Activated T-helper 1 cell treated with anti-CD3 and anti-CD28 coated beads, Interleukin-12 subunit alpha, Interleukin-12 subunit beta, Interleukin-2, Interleukin-4 antibody, amounts not matched to agents 30 ng/mL and 10 ng/mL and 1 ng/mL, durations not matched to agents 14 hours and 24 hours and 36 hours (primary cell): ENCODE measurements at regions of chr16 and their contacts with region 1.

Region 1: GRCh38 chr16:53054670-53055485 is at the start of gene CHD9:
- DNase-seq: peak; percentile 71
- H3K4me3 Mint-ChIP-seq: peak within 1 kb of the TSS; percentile 89
- H3K27ac Mint-ChIP-seq: peak within 1 kb of the TSS; percentile 84
- H3K4me1 Mint-ChIP-seq: peaks cover 25% of the 10 kb centered on the region
- H3K27me3 Mint-ChIP-seq: no peaks in the 10 kb centered on the region
- total RNA-seq, gene CHD9: 17.0 and 18.3 TPM in 2 replicates

Region 2: GRCh38 chr16:52786091-52786490 is 268.8 kb before region 1 on chr16:
- intact Hi-C with region 1: no loop called
- DNase-seq: no peak
- H3K4me3 Mint-ChIP-seq: no peak overlapping the region
- H3K27ac Mint-ChIP-seq: no peak overlapping the region
- H3K4me1 Mint-ChIP-seq: no peaks in the 10 kb centered on the region
- H3K27me3 Mint-ChIP-seq: no peaks in the 10 kb centered on the region

Region 3: GRCh38 chr16:53159781-53160436 is 105.0 kb after region 1 on chr16:
- intact Hi-C with region 1: loop called (anchors 1 kb)
- DNase-seq: no peak
- H3K4me3 Mint-ChIP-seq: no peak overlapping the region
- H3K27ac Mint-ChIP-seq: no peak overlapping the region
- H3K4me1 Mint-ChIP-seq: no peaks in the 10 kb centered on the region
- H3K27me3 Mint-ChIP-seq: no peaks in the 10 kb centered on the region

Region 4: DNA sequence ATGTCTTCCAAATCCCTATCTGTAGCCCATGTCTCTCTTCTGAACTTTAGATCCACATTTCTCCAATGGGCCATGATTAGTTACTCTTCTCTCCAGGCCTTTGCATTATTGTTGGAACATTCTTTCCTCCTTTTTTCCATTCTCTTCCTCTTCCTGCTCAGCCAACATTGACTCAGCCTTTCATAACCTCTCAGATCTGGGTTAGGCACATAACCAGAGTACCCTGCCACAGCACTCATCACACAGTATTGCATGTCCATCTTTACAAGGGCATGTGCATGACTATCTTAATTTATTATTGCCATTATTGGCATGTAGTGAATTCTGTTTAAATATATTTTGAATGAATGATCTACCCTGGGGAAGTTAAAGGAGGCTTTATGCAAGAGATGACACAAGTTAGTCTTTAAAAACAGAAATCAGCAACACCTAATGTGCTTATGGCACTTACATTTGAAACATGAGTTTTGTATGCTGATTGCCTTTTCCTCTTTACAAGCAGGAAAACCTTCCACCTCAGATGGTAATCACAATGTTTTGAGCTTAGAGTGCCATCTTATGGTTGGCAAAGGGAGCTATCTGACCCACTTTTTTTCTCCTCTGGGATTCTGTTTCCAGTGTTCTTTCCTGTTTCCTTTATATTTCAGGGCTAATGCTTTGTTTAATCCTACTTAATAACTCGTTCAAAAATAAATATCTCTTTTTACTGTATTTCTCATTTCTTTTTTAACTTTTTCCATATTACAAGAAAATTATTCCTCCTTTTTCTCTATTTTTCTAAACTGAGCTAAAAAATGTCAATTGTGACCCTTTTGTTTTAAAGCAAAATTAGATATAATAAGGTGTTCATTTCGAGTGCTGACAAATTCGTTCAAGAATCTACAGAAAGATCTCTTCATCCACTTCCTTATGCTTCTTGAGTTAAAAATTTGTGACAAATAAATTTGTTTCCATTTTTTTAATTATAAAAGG is 228.4 kb after region 1 on chr16:
- intact Hi-C with region 1: loop called (anchors 1 kb)
- DNase-seq: no peak
- H3K4me3 Mint-ChIP-seq: no peak overlapping the region
- H3K27ac Mint-ChIP-seq: no peak overlapping the region
- H3K4me1 Mint-ChIP-seq: no peaks in the 10 kb centered on the region
- H3K27me3 Mint-ChIP-seq: no peaks in the 10 kb centered on the region

Region 5: GRCh38 chr16:53457670-53458069 is 402.8 kb after region 1 on chr16:
- intact Hi-C with region 1: loop called (anchors 5 kb)
- DNase-seq: peak; percentile 80
- H3K4me3 Mint-ChIP-seq: peak overlapping the region; percentile 73
- H3K27ac Mint-ChIP-seq: peak overlapping the region; percentile 94
- H3K4me1 Mint-ChIP-seq: peaks cover 88% of the 10 kb centered on the region
- H3K27me3 Mint-ChIP-seq: no peaks in the 10 kb centered on the region

Region 6: DNA sequence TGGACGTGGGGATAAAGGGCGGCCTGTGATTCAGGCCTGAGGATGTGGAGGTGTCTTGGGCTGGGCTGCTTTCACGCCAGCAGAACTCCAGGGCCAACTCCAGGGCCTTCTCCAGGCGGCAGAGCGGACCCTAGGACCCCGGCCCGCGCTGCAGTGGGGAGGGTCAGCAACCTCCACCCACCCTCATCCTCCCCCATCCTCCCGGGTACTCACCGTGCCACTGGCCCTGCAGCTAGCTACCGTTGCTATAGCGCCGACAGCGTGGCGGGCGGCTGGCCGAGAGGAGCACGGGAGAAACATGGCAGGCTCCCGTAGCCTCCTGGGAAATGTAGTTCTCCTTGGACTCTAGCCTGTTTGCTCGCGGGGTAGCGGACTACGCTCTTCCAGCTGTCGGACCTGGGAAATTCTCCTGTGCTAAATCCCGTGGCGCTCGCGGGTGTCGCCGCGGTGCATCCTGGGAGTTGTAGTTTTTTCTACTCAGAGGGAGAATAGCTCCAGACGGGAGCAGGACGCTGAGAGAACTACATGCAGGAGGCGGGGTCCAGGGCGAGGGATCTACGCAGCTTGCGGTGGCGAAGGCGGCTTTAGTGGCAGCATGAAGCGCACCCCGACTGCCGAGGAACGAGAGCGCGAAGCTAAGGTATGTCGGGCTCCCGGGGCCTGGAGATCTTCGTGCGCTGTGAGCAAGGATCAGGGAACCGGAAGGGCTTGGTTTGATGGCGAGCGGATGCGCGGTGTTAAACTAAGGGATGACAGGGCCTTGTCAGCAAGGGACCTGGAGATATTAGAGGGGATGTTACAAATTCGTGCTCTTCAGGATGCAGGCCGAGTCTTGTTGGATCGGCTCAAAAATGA is 648.9 kb after region 1 on chr16 and contains the starts of genes FTO and RPGRIP1L:
- intact Hi-C with region 1: loop called (anchors 5 kb)
- DNase-seq: peak; percentile 96
- H3K4me3 Mint-ChIP-seq: peak within 1 kb of the TSS; percentile 96
- H3K27ac Mint-ChIP-seq: peak within 1 kb of the TSS; percentile 91
- H3K4me1 Mint-ChIP-seq: peaks cover 36% of the 10 kb centered on the region
- H3K27me3 Mint-ChIP-seq: no peaks in the 10 kb centered on the region
- total RNA-seq, gene FTO: 56.4 and 63.0 TPM in 2 replicates
- total RNA-seq, gene RPGRIP1L: 9.3 and 10.9 TPM in 2 replicates